ENCODE measurements at regions of chr13 and their contacts with region 1.

Region 1: DNA sequence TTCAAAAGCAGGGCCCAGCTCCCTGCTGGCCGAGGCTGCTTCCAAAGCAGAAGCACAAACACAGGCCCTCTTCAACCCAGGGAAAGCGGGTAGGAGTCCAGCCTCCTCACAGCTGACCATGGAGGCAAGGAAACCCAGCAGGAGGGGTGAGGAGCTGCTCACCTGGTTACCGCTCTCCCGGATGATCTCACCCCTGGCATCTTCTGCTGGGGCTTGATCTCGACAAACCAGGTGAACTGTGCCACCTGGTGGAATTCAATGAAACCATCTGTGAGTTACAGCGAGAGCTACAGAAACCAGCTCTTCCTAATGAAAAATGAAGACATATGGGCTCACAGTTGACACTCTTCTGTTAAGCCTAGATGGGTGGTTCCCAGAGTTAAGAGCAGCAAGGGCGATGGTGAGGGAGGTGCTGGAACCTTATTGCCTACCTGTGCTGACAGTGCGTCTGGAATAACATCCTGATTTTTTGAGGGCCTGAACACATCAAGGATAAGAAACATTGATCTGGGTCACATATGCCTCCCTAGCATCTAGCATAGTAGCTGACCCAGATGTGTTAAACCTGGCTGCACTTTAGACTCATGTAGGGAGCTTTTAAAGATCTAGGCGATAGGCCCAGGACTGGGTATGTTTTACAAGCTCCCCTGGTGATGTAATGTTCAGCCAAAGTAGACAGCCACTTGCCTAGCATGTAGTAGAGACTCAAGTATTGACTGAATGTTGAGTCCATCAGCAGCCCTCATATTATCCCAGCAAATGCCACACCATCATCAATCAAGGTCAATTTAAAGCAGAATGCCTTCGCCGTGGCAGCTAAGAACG is 6.1 kb downstream of the DHRS12 start:
- DNase-seq: peak; percentile 66 to 81 (median 71)
- H3K4me3 ChIP-seq: no peak overlapping the region
- H3K4me3 Mint-ChIP-seq: no peak overlapping the region
- H3K27ac ChIP-seq: peak overlapping the region; percentile 11
- H3K27ac Mint-ChIP-seq: peak overlapping the region; percentile 27 to 92 (median 77)
- H3K4me1 ChIP-seq: peaks cover 17% of the 10 kb centered on the region
- H3K4me1 Mint-ChIP-seq: peaks cover 20 to 39% (median 23%) of the 10 kb centered on the region in 4 donors
- H3K27me3 ChIP-seq: no peaks in the 10 kb centered on the region
- H3K27me3 Mint-ChIP-seq: no peaks in the 10 kb centered on the region

Region 2: DNA sequence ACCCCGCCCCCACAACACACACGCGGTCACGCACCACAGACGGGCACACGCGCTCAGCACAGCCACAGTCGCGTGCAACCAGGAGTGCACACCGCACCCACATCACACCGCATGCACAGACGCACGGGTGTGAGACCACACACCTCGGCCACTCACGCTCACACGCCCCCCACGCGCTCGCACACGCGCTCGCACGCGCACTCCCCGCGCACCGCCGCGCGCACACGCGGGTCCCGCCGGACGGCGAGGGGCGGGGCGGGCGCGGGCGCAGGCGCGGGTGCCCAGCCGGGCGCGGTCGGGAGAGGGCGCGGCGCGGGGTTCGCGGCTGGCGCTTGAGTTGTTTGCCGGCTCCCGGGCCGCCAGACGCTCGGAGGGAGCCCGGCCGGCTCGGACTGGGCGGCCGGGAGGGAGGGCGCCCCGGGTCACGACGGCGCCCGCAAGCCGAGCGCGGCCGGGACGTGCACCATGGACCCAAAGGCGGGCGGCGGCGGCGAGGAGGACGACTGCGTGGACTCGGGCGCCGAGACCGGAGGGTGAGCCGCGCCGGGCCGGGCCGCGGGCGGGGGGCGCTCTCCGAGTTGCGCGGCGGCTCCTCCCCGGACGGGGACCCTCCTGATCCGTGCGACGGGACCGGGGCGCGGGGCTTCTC is 575.7 kb before region 1 on chr13 and contains the start of gene FAM124A:
- CTCF ChIA-PET with region 1: no interaction called
- POLR2A ChIA-PET with region 1: interaction called, 3 read pairs
- intact Hi-C with region 1: loop called (anchors 5 kb)
- DNase-seq: peak in 4 of 5 donors; percentile 16 to 31 (median 18)
- H3K4me3 ChIP-seq: peak within 1 kb of the TSS in 1 of 2 donors; percentile 50
- H3K4me3 Mint-ChIP-seq: peak within 1 kb of the TSS; percentile 67 to 79 (median 76)
- H3K27ac ChIP-seq: no peak within 1 kb of the TSS
- H3K27ac Mint-ChIP-seq: peak within 1 kb of the TSS in 1 of 7 donors; percentile 28
- H3K4me1 ChIP-seq: peaks cover 3% of the 10 kb centered on the region
- H3K4me1 Mint-ChIP-seq: no peaks in the 10 kb centered on the region
- H3K27me3 ChIP-seq: peaks cover 20% of the 10 kb centered on the region
- H3K27me3 Mint-ChIP-seq: peaks cover 38 to 43% of the 10 kb centered on the region in 2 donors
- total RNA-seq, gene FAM124A: not detected

Region 3: DNA sequence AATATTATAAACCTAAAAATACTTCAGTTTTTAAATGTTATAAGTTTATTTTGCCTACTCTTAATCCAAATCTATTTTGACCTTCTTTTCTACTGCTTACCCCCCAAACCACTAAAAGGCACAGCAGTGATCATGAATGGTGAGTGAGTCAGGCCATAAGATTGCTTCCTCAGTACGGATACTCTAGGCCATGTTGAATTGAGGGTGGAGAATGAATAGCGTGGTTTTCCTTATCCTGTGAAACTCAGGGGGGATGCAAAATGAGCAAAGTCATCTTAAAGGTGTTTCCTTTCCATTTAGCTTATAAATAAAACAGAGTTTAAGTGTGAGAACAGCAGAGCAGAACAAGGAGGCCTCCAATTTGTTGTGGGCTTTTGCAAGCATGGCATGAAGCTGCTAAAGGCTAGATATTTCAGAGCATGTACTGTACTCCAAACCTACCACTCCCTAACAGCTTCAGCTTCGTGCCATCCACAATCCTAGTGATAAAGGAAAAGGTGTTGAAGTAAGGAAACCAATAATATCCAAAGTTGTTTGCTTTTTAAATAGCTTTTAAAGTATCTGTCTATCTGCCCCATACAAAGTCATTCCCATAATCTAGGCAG is 433.4 kb before region 1 on chr13:
- CTCF ChIA-PET with region 1: interaction called, 3 read pairs
- POLR2A ChIA-PET with region 1: no interaction called
- intact Hi-C with region 1: loop called (anchors 5 kb)
- DNase-seq: no peak
- H3K4me3 ChIP-seq: no peak overlapping the region
- H3K4me3 Mint-ChIP-seq: no peak overlapping the region
- H3K27ac ChIP-seq: no peak overlapping the region
- H3K27ac Mint-ChIP-seq: peak overlapping the region in 2 of 7 donors; percentile 17 to 39
- H3K4me1 ChIP-seq: no peaks in the 10 kb centered on the region
- H3K4me1 Mint-ChIP-seq: no peaks in the 10 kb centered on the region
- H3K27me3 ChIP-seq: no peaks in the 10 kb centered on the region
- H3K27me3 Mint-ChIP-seq: no peaks in the 10 kb centered on the region

Region 4: DNA sequence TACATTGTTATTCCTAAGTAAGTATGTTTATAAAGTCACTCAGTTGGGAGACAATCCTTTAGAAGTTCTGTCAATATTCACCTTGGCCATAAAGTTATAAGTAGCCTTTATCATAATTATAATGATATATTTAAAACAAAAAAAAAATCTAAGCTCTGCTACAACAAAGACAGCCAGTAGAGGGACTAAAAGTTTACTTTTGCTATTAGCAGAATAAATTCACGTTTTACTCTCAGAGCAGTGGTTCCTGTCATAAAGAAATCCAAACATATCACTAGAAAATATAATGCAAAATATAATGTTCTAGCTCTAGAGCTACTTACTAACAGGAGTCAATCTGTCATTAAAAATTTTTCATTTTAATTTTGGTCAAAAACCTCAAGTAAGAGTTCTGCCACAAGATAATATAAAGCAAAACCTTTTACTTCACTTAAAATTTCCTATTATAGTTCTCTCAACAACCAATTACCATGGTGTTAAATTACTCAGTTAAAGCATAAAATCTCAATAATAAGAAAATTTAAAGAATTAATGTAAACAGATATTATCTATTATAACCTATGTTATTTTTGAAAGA is 362.8 kb before region 1 on chr13:
- CTCF ChIA-PET with region 1: interaction called, 61 read pairs
- POLR2A ChIA-PET with region 1: interaction called, 7 read pairs
- intact Hi-C with region 1: loop called (anchors 1 kb)
- DNase-seq: peak in 4 of 5 donors; percentile 35 to 43 (median 42)
- H3K4me3 ChIP-seq: no peak overlapping the region
- H3K4me3 Mint-ChIP-seq: no peak overlapping the region
- H3K27ac ChIP-seq: no peak overlapping the region
- H3K27ac Mint-ChIP-seq: no peak overlapping the region
- H3K4me1 ChIP-seq: peaks cover 13% of the 10 kb centered on the region
- H3K4me1 Mint-ChIP-seq: peaks cover 12 to 20% (median 16%) of the 10 kb centered on the region in 4 donors
- H3K27me3 ChIP-seq: no peaks in the 10 kb centered on the region
- H3K27me3 Mint-ChIP-seq: no peaks in the 10 kb centered on the region

Region 5: DNA sequence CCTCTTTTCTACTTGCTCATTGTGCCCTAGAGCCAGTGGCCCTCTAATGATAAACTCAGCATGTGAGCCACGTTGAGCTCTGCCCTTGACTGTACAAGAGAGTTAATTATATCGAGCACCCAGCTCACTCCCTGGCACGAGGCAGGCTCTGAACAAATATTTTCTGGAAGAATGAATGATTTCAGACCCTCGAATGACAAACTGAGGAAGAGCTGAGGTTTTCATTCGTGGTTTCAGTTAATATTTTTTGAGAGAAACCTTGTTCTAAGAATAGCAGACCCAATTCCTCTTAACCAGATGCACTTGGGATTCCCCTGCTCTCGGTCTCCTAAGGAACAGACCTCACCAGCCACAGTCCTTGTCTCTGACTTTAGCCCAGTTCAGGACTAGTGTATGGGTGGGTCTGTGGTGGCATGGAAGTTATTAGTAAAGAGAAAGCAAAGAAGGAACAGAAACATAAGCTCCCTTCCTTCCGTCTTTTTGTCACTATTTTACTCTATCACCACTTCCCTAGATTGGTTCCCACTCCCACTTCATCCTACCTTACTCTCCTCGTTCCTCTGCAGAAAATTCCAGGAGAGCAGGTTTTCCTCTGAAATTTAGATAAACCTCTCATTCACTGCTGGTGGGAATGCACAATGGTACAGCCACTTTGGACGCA is 235.7 kb before region 1 on chr13:
- CTCF ChIA-PET with region 1: no interaction called
- POLR2A ChIA-PET with region 1: no interaction called
- intact Hi-C with region 1: no loop called
- DNase-seq: no peak
- H3K4me3 ChIP-seq: no peak overlapping the region
- H3K4me3 Mint-ChIP-seq: peak overlapping the region in 3 of 8 donors; percentile 27 to 62 (median 31)
- H3K27ac ChIP-seq: no peak overlapping the region
- H3K27ac Mint-ChIP-seq: peak overlapping the region in 3 of 7 donors; percentile 2 to 53 (median 24)
- H3K4me1 ChIP-seq: peaks cover 7% of the 10 kb centered on the region
- H3K4me1 Mint-ChIP-seq: peaks cover 5 to 24% (median 17%) of the 10 kb centered on the region in 4 donors
- H3K27me3 ChIP-seq: no peaks in the 10 kb centered on the region
- H3K27me3 Mint-ChIP-seq: peaks cover 4 to 8% of the 10 kb centered on the region in 2 donors

Region 6: GRCh38 chr13:51583875-51584730 is 213.8 kb before region 1 on chr13 and contains the start of gene WDFY2:
- CTCF ChIA-PET with region 1: interaction called, 11 read pairs
- POLR2A ChIA-PET with region 1: interaction called, 15 read pairs
- intact Hi-C with region 1: loop called (anchors 1 kb)
- DNase-seq: peak; percentile 99 to 100 (median 100)
- H3K4me3 ChIP-seq: peak within 1 kb of the TSS; percentile 65 to 92
- H3K4me3 Mint-ChIP-seq: peak within 1 kb of the TSS; percentile 97 to 100 (median 99)
- H3K27ac ChIP-seq: peak within 1 kb of the TSS; percentile 88
- H3K27ac Mint-ChIP-seq: peak within 1 kb of the TSS; percentile 96 to 100 (median 100)
- H3K4me1 ChIP-seq: peaks cover 26% of the 10 kb centered on the region
- H3K4me1 Mint-ChIP-seq: peaks cover 27 to 44% (median 35%) of the 10 kb centered on the region in 4 donors
- H3K27me3 ChIP-seq: no peaks in the 10 kb centered on the region
- H3K27me3 Mint-ChIP-seq: no peaks in the 10 kb centered on the region
- total RNA-seq, gene WDFY2: 20.0 to 21.8 TPM

Region 7: GRCh38 chr13:51785712-51786424 is 12.0 kb before region 1 on chr13:
- CTCF ChIA-PET with region 1: interaction called, 21 read pairs
- POLR2A ChIA-PET with region 1: interaction called, 5 read pairs
- intact Hi-C with region 1: no loop called
- DNase-seq: no peak
- H3K4me3 ChIP-seq: no peak overlapping the region
- H3K4me3 Mint-ChIP-seq: no peak overlapping the region
- H3K27ac ChIP-seq: no peak overlapping the region
- H3K27ac Mint-ChIP-seq: no peak overlapping the region
- H3K4me1 ChIP-seq: no peaks in the 10 kb centered on the region
- H3K4me1 Mint-ChIP-seq: peaks cover 0 to 4% (median 2%) of the 10 kb centered on the region in 4 donors
- H3K27me3 ChIP-seq: no peaks in the 10 kb centered on the region
- H3K27me3 Mint-ChIP-seq: no peaks in the 10 kb centered on the region